CD8-positive, alpha-beta memory T cell (primary cell): ENCODE measurements at regions of chr1 and their contacts with region 1.

Region 1: GRCh38 chr1:167401260-167401873 is 117.0 kb downstream of the CD247 start:
- DNase-seq: peak; percentile 30 to 68 (median 41)
- H3K4me3 ChIP-seq: no peak overlapping the region
- H3K4me3 Mint-ChIP-seq: no peak overlapping the region
- H3K27ac ChIP-seq: no peak overlapping the region
- H3K27ac Mint-ChIP-seq: peak overlapping the region in 3 of 8 donors; percentile 9 to 32 (median 13)
- H3K4me1 ChIP-seq: no peaks in the 10 kb centered on the region
- H3K4me1 Mint-ChIP-seq: peaks cover 0 to 4% (median 3%) of the 10 kb centered on the region in 3 donors
- H3K27me3 ChIP-seq: no peaks in the 10 kb centered on the region
- H3K27me3 Mint-ChIP-seq: no peaks in the 10 kb centered on the region

Region 2: GRCh38 chr1:167542109-167543032 is 141.0 kb after region 1 on chr1:
- CTCF ChIA-PET with region 1: interaction called, 64 read pairs
- POLR2A ChIA-PET with region 1: no interaction called
- DNase-seq: no peak
- H3K4me3 ChIP-seq: no peak overlapping the region
- H3K4me3 Mint-ChIP-seq: no peak overlapping the region
- H3K27ac ChIP-seq: no peak overlapping the region
- H3K27ac Mint-ChIP-seq: no peak overlapping the region
- H3K4me1 ChIP-seq: no peaks in the 10 kb centered on the region
- H3K4me1 Mint-ChIP-seq: peaks cover 4 to 22% (median 19%) of the 10 kb centered on the region in 3 donors
- H3K27me3 ChIP-seq: no peaks in the 10 kb centered on the region
- H3K27me3 Mint-ChIP-seq: no peaks in the 10 kb centered on the region